Tibial artery (tissue), 4 donors: ENCODE measurements at regions of chr16 and their contacts with region 1.

Region 1: GRCh38 chr16:75198135-75198600 is 8.8 kb downstream of the CTRB2 start:
- DNase-seq: peak in 1 of 2 donors; percentile 34
- H3K4me3 ChIP-seq: no peak overlapping the region
- H3K27ac ChIP-seq: no peak overlapping the region
- H3K4me1 ChIP-seq: peaks cover 0 to 22% (median 7%) of the 10 kb centered on the region in 4 donors
- H3K27me3 ChIP-seq: peaks cover 0 to 23% of the 10 kb centered on the region in 2 donors
- CTCF ChIP-seq: no peak

Region 2: GRCh38 chr16:75464130-75464918 is 266.2 kb after region 1 on chr16 and contains the start of gene TMEM170A:
- intact Hi-C with region 1: loop called (anchors 5 kb)
- DNase-seq: peak; percentile 99 to 100
- H3K4me3 ChIP-seq: peak within 1 kb of the TSS; percentile 68 to 92
- H3K27ac ChIP-seq: peak within 1 kb of the TSS; percentile 91 to 93
- H3K4me1 ChIP-seq: peaks cover 0 to 31% (median 7%) of the 10 kb centered on the region in 4 donors
- H3K27me3 ChIP-seq: no peaks in the 10 kb centered on the region
- CTCF ChIP-seq: peak; percentile 100

Region 3: DNA sequence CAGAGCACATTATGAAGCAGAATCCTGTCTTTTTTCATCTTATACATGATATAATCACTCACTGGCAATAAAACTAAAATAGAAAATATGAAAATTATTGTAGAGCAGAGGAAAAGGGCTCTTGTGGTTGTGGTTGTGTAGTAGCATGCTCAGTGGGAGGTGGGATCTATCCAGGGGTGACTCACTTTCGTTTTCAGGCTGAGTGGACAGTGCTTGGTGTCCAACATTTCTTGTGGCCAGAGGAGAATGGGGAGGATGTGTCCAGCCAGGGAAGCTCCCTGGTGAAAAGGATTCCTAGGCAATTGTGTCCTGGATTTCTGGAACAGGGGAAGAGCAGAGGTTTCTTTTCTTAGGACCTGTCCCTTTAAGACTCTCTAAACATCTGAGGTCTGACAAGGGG is 560.0 kb after region 1 on chr16:
- intact Hi-C with region 1: loop called (anchors 10 kb)
- DNase-seq: no peak
- H3K4me3 ChIP-seq: no peak overlapping the region
- H3K27ac ChIP-seq: no peak overlapping the region
- H3K4me1 ChIP-seq: no peaks in the 10 kb centered on the region
- H3K27me3 ChIP-seq: no peaks in the 10 kb centered on the region
- CTCF ChIP-seq: no peak